GM10248 (cell line): ENCODE measurements at regions of chr1 and their contacts with region 1.

Region 1: GRCh38 chr1:119968068-119968492 is 71.8 kb upstream of the ADAM30 start:
- DNase-seq: peak; percentile 37
- CTCF ChIP-seq: peak; percentile 82

Region 2: DNA sequence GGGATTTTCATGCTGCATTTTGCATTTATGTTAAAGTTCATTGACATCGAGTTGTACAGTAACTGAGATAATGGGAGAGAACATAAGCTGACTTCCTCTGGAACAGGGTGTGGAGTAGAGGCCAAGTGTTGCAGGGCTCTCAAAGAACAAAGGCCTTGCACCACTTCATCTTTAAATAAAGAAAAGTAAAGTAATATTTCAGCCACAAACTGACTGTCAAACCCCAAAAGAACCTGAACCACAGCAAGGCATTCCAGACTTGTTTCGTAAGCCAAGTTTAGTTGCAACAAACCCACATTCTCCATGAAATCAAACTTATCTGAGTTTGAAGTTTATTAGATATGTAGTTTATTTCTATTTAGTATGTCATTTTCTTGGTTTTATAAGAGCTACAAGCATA is 180.3 kb before region 1 on chr1:
- CTCF ChIA-PET with region 1: no interaction called
- POLR2A ChIA-PET with region 1: no interaction called
- DNase-seq: no peak
- CTCF ChIP-seq: no peak

Region 3: GRCh38 chr1:119870917-119871596 is 97.0 kb before region 1 on chr1:
- CTCF ChIA-PET with region 1: no interaction called
- POLR2A ChIA-PET with region 1: no interaction called
- DNase-seq: peak; percentile 58
- CTCF ChIP-seq: peak; percentile 83

Region 4: GRCh38 chr1:119956306-119956705 is 11.8 kb before region 1 on chr1:
- CTCF ChIA-PET with region 1: interaction called, 100 read pairs
- POLR2A ChIA-PET with region 1: no interaction called
- DNase-seq: no peak
- CTCF ChIP-seq: no peak

Region 5: DNA sequence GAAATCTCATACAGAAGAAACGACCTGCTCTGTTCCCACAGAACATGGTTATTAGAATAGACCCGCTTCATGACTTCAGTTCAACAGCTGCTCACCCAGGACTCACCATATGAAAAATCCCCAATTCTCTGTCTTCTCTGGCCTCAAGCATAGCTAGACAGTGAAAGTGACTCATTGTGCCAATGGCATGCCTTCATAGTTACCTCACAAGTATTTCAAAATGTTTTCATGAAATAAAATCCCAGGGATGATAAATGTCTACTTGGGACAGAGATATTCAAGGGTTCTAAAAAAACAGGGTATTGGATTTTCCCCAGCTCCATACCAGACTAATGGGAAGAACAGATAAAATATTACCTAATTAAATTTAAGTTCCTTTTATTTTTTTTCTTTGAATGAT is 19.0 kb after region 1 on chr1:
- CTCF ChIA-PET with region 1: interaction called, 15 read pairs
- POLR2A ChIA-PET with region 1: no interaction called
- DNase-seq: no peak
- CTCF ChIP-seq: no peak